Activated T-helper 1 cell treated with anti-CD3 and anti-CD28 coated beads, Interleukin-12 subunit alpha, Interleukin-12 subunit beta, Interleukin-2, Interleukin-4 antibody, amounts not matched to agents 30 ng/mL and 10 ng/mL and 1 ng/mL, durations not matched to agents 14 hours and 24 hours and 36 hours (primary cell): ENCODE measurements at regions of chr2 and their contacts with region 1.

Region 1: DNA sequence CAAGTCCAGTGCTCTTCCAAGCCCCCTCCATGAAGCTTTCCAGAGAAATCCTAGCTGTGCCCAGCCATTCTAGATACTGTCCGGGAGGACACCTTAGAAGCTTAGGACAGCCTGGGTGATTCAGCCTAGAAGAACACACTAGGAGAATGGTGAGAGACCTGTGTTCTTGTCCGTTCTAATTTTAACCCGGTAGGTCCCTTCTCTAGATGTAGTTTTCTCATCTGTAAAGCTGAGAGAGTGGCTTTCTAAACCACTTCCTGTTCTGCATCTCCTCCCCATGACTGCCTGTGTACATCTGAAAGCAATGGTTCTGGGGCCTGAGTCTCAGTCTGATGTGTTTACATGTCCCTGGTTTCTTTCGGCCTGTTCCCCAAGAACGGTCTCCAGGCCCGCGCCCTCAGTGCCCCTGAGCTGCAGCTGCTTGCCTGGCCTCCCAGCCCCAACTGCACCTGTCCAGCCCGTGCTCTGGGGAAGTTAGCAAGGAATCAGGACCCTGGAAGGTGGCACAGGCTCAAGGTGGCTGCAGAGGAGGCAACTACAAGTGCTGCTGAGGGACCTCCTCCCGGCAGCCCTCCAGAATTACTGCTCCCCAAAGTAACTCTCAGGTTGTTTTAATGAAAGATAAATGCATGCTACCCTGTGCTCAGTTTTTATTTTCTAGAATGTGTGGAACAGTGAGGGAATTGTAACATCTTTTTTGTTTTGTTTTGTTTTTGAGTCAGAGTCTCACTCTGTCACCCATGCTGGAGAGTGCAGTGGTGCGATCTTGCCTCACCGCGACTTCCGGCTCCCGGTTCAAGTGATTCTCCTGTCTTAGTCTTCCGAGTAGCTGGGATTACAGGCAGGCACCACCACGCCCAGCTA is 105.9 kb downstream of the LBH start:
- DNase-seq: peak; percentile 60
- H3K4me3 Mint-ChIP-seq: peak overlapping the region; percentile 64
- H3K27ac Mint-ChIP-seq: peak overlapping the region; percentile 94
- H3K4me1 Mint-ChIP-seq: peaks cover 76% of the 10 kb centered on the region
- H3K27me3 Mint-ChIP-seq: no peaks in the 10 kb centered on the region

Region 2: DNA sequence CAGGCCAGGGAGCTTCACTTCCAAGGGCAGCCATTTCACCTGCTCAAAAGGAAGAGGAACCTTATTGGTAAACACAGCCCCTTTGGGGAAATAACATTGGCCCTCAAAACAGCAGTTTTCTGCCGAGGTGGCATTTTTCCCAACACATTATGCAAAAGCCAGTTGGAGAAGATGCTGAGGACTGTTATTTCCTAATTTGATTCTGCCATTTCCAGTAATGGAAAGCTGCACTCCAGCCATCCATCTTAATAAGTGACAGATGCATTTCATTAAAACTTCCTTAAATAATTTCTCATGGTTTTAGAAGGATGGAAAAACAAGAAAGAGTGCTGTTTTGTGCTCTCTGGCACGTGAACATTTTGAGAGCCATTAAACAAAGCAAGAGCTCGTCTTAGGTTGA is 359.9 kb before region 1 on chr2:
- intact Hi-C with region 1: no loop called
- DNase-seq: no peak
- H3K4me3 Mint-ChIP-seq: no peak overlapping the region
- H3K27ac Mint-ChIP-seq: no peak overlapping the region
- H3K4me1 Mint-ChIP-seq: no peaks in the 10 kb centered on the region
- H3K27me3 Mint-ChIP-seq: peaks cover 7% of the 10 kb centered on the region

Region 3: GRCh38 chr2:30231212-30231995 is 105.8 kb before region 1 on chr2 and contains the start of gene LBH:
- intact Hi-C with region 1: loop called (anchors 1 kb)
- DNase-seq: peak; percentile 74
- H3K4me3 Mint-ChIP-seq: peak within 1 kb of the TSS; percentile 98
- H3K27ac Mint-ChIP-seq: peak within 1 kb of the TSS; percentile 99
- H3K4me1 Mint-ChIP-seq: peaks cover 72% of the 10 kb centered on the region
- H3K27me3 Mint-ChIP-seq: peaks cover 7% of the 10 kb centered on the region
- total RNA-seq, gene LBH: 306 and 313 TPM in 2 replicates

Region 4: GRCh38 chr2:30273261-30273861 is 63.8 kb before region 1 on chr2:
- intact Hi-C with region 1: loop called (anchors 1 kb)
- DNase-seq: no peak
- H3K4me3 Mint-ChIP-seq: peak overlapping the region; percentile 56
- H3K27ac Mint-ChIP-seq: peak overlapping the region; percentile 97
- H3K4me1 Mint-ChIP-seq: peaks cover 71% of the 10 kb centered on the region
- H3K27me3 Mint-ChIP-seq: peaks cover 4% of the 10 kb centered on the region

Region 5: GRCh38 chr2:30315391-30316063 is 21.7 kb before region 1 on chr2:
- intact Hi-C with region 1: loop called (anchors 1 kb)
- DNase-seq: peak; percentile 11
- H3K4me3 Mint-ChIP-seq: peak overlapping the region; percentile 58
- H3K27ac Mint-ChIP-seq: peak overlapping the region; percentile 94
- H3K4me1 Mint-ChIP-seq: peaks cover 44% of the 10 kb centered on the region
- H3K27me3 Mint-ChIP-seq: no peaks in the 10 kb centered on the region

Region 6: GRCh38 chr2:30366199-30366691 is 29.0 kb after region 1 on chr2:
- intact Hi-C with region 1: loop called (anchors 1 kb)
- DNase-seq: peak; percentile 4
- H3K4me3 Mint-ChIP-seq: peak overlapping the region; percentile 8
- H3K27ac Mint-ChIP-seq: peak overlapping the region; percentile 54
- H3K4me1 Mint-ChIP-seq: peaks cover 49% of the 10 kb centered on the region
- H3K27me3 Mint-ChIP-seq: no peaks in the 10 kb centered on the region

Region 7: GRCh38 chr2:30382995-30383394 is 45.8 kb after region 1 on chr2:
- intact Hi-C with region 1: no loop called
- DNase-seq: no peak
- H3K4me3 Mint-ChIP-seq: no peak overlapping the region
- H3K27ac Mint-ChIP-seq: no peak overlapping the region
- H3K4me1 Mint-ChIP-seq: no peaks in the 10 kb centered on the region
- H3K27me3 Mint-ChIP-seq: peaks cover 13% of the 10 kb centered on the region

Region 8: DNA sequence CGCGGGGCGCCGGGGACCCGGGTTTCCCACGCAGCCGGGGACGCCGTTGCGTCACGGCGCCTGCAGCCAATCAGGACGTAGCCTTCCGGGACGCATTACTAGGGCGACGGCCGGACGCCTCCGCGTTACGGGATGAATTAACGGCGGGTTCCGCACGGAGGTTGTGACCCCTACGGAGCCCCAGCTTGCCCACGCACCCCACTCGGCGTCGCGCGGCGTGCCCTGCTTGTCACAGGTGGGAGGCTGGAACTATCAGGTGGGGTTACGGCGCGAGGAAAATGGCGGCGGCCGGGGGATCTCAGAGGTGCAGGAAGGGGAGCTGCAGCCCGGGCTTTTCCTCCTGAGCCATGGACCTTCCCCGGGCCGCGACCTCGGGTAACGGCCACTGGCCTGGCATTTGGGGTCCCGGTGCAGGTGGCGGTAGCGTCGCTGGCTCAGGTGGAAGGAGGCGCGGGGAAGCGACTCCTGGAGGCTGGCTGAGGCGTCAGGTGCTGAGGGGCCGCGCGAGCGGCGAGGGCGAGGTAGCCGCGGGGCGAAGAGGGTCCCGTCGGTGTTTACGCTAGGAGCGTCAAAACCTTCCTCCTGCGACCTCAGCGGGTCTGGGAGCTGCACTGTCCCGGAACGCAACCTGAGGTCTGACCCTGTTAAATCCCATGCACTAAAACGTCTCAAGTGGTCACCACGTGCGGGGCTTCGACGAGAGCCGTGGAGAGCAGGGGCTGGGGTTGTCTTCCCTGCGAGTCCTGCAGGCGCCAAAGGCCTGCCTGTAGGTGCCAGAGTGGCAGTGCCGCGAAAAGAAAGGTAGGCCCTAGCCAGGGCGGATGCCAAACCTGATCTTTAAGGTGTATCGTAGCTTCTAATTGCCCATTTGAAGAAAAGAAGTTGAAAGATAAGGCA is 110.2 kb after region 1 on chr2 and contains the start of gene LCLAT1:
- intact Hi-C with region 1: loop called (anchors 1 kb)
- DNase-seq: peak; percentile 84
- H3K4me3 Mint-ChIP-seq: peak within 1 kb of the TSS; percentile 96
- H3K27ac Mint-ChIP-seq: peak within 1 kb of the TSS; percentile 98
- H3K4me1 Mint-ChIP-seq: peaks cover 42% of the 10 kb centered on the region
- H3K27me3 Mint-ChIP-seq: no peaks in the 10 kb centered on the region
- total RNA-seq, gene LCLAT1: 40.1 and 46.2 TPM in 2 replicates

Region 9: GRCh38 chr2:30711646-30712085 is 374.5 kb after region 1 on chr2:
- intact Hi-C with region 1: loop called (anchors 10 kb)
- DNase-seq: peak; percentile 80
- H3K4me3 Mint-ChIP-seq: no peak overlapping the region
- H3K27ac Mint-ChIP-seq: no peak overlapping the region
- H3K4me1 Mint-ChIP-seq: peaks cover 16% of the 10 kb centered on the region
- H3K27me3 Mint-ChIP-seq: no peaks in the 10 kb centered on the region

Region 10: DNA sequence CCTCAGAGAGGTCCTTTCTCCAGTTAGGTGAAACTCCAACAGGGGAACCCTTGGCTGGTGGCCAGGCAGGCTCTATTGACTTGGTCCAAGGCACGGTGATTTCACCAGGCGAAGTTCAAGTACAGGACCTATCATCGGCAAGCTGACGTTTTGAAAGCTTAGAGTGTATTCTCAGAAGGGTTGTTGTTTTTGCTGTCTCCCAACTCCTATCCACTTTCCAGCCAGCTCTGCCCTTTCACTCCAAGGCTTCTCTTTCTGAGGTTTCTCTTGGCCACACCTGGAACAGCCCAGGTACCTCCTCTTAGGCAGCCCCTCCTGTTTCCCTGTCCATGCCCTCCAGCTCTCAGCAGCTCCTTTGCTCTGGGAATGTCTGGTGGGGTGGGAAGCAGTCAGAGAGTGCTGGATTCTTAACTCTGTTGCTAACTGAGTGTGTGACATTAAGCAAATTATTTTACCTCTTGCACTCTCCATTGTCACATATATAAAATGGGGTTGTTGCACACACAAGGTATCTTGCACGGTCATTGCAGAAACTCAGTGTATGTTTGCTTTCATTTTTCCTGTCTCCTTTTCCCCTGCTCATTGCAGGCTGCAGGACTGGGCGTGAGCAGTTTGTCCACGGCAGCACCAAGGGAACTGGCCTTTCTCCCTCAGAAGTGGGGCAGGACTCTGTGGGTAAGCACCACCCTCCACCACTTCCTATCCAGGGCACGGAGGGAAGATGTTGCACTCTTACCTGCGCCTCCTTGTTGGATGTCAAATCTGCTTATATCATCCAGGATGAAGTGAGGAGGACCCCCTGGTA is 439.8 kb after region 1 on chr2:
- intact Hi-C with region 1: no loop called
- DNase-seq: no peak
- H3K4me3 Mint-ChIP-seq: no peak overlapping the region
- H3K27ac Mint-ChIP-seq: no peak overlapping the region
- H3K4me1 Mint-ChIP-seq: no peaks in the 10 kb centered on the region
- H3K27me3 Mint-ChIP-seq: peaks cover 11% of the 10 kb centered on the region